ENCODE measurements at regions of chr3 and their contacts with region 1.

Region 1: DNA sequence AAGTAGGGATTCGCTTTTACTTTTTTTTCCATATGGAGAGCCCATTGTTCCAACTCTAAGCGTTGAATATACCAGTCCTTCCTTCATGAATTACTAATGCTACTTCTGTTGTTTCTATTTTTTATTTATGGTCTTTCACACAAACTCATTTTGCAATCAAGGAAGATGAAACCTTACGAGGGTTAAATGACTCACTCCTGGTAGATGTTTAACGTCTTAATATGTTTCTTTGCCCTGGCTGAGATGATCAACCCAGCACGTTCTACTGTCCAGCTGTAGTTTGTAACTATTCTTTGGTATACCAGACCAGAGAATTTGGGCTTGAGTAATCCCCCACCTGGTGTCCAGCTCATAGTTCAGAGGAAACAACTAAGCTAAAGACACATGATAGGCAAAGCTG is 23.1 kb downstream of the CDCP1 start:
- DNase-seq: no peak
- H3K4me3 Mint-ChIP-seq: peak overlapping the region; percentile 21
- H3K27ac Mint-ChIP-seq: peak overlapping the region; percentile 83
- H3K4me1 Mint-ChIP-seq: peaks cover 77% of the 10 kb centered on the region
- H3K27me3 Mint-ChIP-seq: no peaks in the 10 kb centered on the region
- CTCF ChIP-seq: no peak

Region 2: DNA sequence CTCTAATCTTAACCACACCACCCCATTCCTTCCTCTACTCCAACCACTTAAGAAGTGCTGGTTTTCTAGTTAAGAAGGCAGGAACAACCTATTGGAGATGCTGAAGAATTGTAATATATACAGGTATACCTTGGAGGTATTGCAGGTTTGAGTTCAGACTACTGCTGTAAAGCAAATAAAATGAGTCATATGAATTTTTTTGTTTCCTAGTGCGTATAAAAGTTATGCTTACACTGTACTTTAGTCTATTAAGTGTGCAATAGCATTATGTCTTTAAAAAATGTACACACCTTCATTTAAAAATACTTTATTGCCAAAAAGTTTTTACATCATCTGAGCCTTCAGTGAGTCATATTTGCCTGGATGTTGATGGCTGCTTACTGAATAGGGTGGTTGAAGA is 858.9 kb before region 1 on chr3:
- CTCF ChIA-PET with region 1: no interaction called
- intact Hi-C with region 1: no loop called
- DNase-seq: no peak
- H3K4me3 Mint-ChIP-seq: no peak overlapping the region
- H3K27ac Mint-ChIP-seq: no peak overlapping the region
- H3K4me1 Mint-ChIP-seq: no peaks in the 10 kb centered on the region
- H3K27me3 Mint-ChIP-seq: no peaks in the 10 kb centered on the region
- CTCF ChIP-seq: no peak

Region 3: DNA sequence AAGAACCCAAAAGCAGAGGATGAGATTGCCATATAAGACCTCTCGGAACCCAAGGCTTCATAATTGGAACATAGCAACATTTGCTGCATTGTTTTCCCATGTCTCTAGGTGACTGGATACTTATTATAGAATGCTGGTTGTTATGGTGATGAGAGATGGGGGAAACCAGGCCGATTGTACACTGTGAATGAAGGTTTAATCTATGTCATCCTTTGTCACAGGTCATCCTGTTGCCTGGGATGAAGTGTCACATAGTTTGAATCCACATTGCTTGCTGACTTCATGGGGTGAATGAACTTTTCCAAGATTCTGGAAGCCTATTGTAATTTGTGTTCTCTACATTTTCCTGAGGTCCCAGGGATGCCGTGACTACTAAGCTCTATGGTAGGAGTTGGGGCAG is 55.1 kb before region 1 on chr3:
- CTCF ChIA-PET with region 1: no interaction called
- intact Hi-C with region 1: no loop called
- DNase-seq: no peak
- H3K4me3 Mint-ChIP-seq: no peak overlapping the region
- H3K27ac Mint-ChIP-seq: no peak overlapping the region
- H3K4me1 Mint-ChIP-seq: peaks cover 17% of the 10 kb centered on the region
- H3K27me3 Mint-ChIP-seq: no peaks in the 10 kb centered on the region
- CTCF ChIP-seq: no peak

Region 4: DNA sequence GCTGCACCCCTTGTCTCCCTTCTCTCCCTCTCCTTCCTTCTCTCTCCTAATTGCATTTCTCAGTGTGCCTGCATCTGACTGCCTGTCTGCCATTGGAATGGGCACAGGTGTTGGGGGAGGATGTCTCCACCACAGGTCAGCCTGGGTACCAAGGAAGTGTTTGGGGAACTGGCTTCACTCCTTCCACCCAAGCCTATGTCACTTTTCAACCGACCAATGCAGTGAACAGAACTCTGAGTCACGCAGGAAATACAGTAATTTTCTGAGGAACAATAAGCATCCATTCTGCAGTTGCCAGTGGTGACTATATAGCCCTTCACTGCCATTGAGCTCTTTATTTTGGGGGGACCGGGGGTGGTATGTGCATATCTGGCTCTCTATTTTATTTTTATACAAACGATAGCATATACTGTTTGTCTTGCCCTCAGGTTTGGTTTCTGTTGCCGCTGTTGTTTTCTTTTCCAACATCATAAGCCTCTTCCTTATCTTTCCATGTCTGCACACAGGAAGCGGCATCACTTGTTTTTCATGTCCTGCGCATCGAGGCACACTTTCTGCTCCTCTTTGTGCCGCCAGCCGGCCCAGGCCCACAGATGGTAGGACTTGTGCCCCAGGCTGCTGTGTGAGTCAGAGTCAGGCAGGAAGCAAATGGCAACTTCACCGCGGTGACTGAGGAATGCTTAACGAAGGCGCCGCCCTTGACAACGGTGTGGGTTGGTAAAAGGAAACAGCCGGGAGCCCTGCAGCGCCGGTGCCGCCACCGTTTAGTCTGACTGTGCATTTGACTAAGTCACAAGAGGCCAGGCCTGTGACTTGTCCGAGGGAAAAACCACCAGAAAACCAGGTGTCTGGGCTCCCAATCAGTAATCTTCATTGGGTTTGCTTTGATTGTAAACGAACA is 44.2 kb after region 1 on chr3:
- CTCF ChIA-PET with region 1: interaction called, 5 read pairs
- intact Hi-C with region 1: loop called (anchors 5 kb)
- DNase-seq: peak; percentile 92
- H3K4me3 Mint-ChIP-seq: peak overlapping the region; percentile 0
- H3K27ac Mint-ChIP-seq: peak overlapping the region; percentile 68
- H3K4me1 Mint-ChIP-seq: peaks cover 23% of the 10 kb centered on the region
- H3K27me3 Mint-ChIP-seq: no peaks in the 10 kb centered on the region
- CTCF ChIP-seq: no peak

Region 5: DNA sequence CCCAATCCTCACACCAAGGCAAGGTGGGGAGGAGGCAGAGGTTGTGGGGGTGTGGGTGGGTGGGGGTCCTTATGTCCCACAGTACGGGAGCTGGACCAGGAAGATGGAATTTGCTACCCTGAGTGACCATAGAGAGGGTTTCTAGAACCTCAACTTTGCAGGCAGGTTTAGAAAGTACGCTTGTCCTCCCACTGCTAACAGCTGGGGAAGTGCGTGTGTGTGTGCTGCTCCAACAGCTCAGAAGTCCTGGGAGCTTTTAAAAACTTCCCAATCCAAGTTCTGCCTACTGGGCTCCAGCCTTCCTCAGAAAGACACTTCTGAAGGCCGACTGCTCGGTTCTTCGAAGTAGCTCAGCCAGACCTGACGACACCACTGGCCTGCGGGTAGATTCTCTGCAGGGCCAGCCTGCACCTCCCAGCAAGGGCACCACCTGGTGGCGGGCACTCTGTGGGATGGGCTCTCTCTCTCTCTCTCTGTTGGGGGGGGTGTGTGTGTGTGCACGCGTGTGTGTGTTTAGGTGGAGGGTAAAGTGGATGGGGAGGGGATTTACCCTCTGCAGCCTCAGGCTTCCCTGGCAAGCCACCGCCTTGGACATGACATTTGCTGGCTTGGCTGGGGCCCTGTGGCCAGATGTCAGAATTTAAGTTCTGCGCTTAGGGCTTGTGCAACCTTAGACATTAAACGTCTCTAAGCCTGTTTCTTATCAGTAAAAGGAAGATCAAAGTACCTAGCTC is 87.4 kb after region 1 on chr3:
- CTCF ChIA-PET with region 1: interaction called, 5 read pairs
- intact Hi-C with region 1: loop called (anchors 5 kb)
- DNase-seq: peak; percentile 88
- H3K4me3 Mint-ChIP-seq: no peak overlapping the region
- H3K27ac Mint-ChIP-seq: no peak overlapping the region
- H3K4me1 Mint-ChIP-seq: peaks cover 8% of the 10 kb centered on the region
- H3K27me3 Mint-ChIP-seq: peaks cover 13% of the 10 kb centered on the region
- CTCF ChIP-seq: peak; percentile 78